Mammary epithelial cell (primary cell): ENCODE measurements at regions of chr1 and their contacts with region 1.

Region 1: GRCh38 chr1:21782868-21783678 is at the start of gene USP48:
- DNase-seq: peak; percentile 95
- H3K4me3 ChIP-seq: peak within 1 kb of the TSS; percentile 84 to 94 (median 85)
- H3K27ac ChIP-seq: peak within 1 kb of the TSS; percentile 98
- H3K4me1 ChIP-seq: no peaks in the 10 kb centered on the region
- H3K27me3 ChIP-seq: no peaks in the 10 kb centered on the region
- CTCF ChIP-seq: no peak
- total RNA-seq, gene USP48: 33.3 to 53.5 TPM

Region 2: GRCh38 chr1:21764615-21765423 is 18.3 kb before region 1 on chr1:
- CTCF ChIA-PET with region 1: no interaction called
- dilution Hi-C with region 1: no loop called
- in situ Hi-C with region 1: no loop called
- intact Hi-C with region 1: loop called (anchors 2 kb)
- DNase-seq: peak; percentile 90
- H3K4me3 ChIP-seq: no peak overlapping the region
- H3K27ac ChIP-seq: no peak overlapping the region
- H3K4me1 ChIP-seq: peaks cover 19% of the 10 kb centered on the region
- H3K27me3 ChIP-seq: no peaks in the 10 kb centered on the region
- CTCF ChIP-seq: no peak

Region 3: DNA sequence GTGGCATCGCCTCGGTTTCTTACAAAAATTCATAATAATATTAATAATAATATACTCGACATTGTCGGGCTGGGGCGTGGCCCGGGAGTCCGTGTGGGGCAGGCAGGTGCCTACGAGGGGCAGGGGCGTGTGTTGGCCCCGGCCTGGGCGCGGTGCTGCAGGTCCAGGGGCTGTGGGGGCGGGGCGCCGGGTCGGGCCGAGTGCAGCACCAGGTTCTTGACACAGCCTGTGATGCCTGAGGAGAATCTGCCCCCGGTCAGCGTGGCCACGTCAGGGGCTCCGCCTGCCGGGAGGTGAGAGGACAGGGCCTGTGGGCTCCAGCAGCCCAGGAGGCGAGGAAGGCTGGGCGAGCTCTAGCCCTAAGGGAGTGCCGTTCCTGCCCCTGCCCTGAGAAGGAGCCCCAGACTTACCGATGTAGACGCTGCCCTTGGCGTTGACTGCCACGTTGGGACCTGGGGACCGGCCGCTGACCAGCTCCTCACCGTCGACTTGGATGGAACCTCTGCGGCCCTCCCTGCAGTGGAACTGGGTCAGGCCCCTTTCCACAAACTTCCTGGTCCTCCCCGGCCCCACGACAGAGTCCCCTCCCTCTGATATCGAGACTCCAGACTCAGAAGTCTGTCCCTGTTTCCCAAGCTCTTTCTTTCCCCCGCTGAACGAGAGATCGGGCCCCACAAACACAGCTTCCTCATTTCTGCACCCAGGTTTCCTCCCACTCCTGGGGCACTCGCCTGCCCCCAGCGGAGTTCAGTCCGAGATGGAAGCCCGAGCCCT is 40.3 kb after region 1 on chr1:
- CTCF ChIA-PET with region 1: no interaction called
- dilution Hi-C with region 1: no loop called
- in situ Hi-C with region 1: no loop called
- intact Hi-C with region 1: no loop called
- DNase-seq: no peak
- H3K4me3 ChIP-seq: no peak overlapping the region
- H3K27ac ChIP-seq: no peak overlapping the region
- H3K4me1 ChIP-seq: no peaks in the 10 kb centered on the region
- H3K27me3 ChIP-seq: no peaks in the 10 kb centered on the region
- CTCF ChIP-seq: no peak

Region 4: DNA sequence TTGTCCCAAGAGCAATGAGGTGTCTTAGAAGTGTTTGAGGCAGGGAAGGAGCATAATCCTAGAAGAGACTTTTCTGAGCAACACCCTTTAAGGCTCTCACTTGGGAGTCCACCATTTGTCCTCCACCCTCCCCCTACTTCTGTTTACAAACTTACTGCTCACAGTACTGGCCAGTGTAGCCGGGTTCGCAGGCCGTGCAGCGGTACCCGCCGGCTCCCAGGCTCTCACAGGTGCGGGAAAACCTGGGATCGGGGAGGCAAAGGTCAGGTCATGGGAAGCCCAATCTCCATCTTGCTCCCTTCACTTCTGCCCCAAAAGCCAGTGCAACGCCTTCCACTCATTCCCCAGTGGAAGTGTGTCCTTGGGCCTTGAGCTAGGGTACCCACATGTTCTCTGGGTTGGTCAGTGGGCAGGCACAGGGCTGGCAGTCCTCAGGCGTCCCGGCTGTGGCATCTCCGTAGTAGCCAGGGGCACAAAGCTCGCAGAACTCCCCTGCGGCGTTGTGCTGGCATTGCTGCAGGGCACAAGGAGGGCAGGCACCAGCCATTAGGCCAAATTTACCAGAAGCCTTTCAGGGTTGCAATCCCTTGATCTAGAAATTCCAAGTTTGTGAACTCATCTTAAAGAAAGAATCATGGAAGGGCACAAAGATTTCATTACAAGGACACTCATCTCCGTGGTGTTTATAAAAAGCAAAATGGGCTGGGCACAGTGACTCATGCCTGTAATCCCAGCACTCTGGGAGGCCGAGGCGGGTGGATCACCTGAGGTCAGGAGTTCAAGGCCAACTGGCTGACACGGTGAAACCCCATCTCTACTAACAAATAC is 78.7 kb after region 1 on chr1:
- CTCF ChIA-PET with region 1: no interaction called
- dilution Hi-C with region 1: no loop called
- in situ Hi-C with region 1: no loop called
- intact Hi-C with region 1: loop called (anchors 2 kb)
- DNase-seq: peak; percentile 57
- H3K4me3 ChIP-seq: no peak overlapping the region
- H3K27ac ChIP-seq: no peak overlapping the region
- H3K4me1 ChIP-seq: peaks cover 20% of the 10 kb centered on the region
- H3K27me3 ChIP-seq: no peaks in the 10 kb centered on the region
- CTCF ChIP-seq: no peak

Region 5: GRCh38 chr1:21882669-21883415 is 99.8 kb after region 1 on chr1:
- CTCF ChIA-PET with region 1: no interaction called
- dilution Hi-C with region 1: loop called (anchors 5 kb)
- in situ Hi-C with region 1: no loop called
- intact Hi-C with region 1: no loop called
- DNase-seq: no peak
- H3K4me3 ChIP-seq: no peak overlapping the region
- H3K27ac ChIP-seq: no peak overlapping the region
- H3K4me1 ChIP-seq: no peaks in the 10 kb centered on the region
- H3K27me3 ChIP-seq: no peaks in the 10 kb centered on the region
- CTCF ChIP-seq: no peak

Region 6: DNA sequence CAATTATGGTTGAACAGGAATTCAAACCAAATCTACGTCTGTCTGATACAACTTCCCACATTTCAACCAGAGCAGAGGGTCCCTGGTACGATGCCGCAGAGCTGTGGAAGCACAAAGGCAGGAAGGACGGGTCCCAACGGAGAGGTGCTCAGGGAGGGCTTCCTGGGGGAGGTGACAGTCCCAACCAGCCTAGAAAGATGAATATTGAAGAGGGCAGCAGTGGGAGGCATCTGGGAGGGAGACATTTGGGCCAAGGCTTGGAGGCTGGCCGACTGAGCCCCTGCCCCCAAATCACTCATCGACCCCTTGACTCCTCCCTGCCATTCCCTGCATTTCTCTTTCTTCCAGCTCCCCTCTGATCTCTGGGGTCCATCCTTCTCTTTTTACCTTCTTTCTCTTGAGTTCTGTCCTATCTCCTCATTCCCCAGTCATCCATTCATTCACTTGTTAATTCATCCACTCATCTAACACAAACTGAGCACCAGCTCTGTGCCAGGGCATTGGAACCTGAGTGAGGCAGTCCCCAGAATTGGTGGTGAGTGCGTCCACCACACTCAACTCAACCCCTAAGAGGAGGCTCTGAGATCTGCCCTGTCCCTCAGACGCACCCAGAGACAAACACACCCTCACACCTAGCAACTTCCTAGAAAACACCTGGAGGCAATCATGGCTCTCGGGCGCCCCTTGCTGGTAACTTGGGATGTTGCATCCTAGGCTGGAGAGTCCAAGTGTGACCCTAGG is 180.6 kb after region 1 on chr1:
- CTCF ChIA-PET with region 1: no interaction called
- dilution Hi-C with region 1: loop called (anchors 5 kb)
- in situ Hi-C with region 1: no loop called
- intact Hi-C with region 1: loop called (anchors 2 kb)
- DNase-seq: peak; percentile 71
- H3K4me3 ChIP-seq: no peak overlapping the region
- H3K27ac ChIP-seq: no peak overlapping the region
- H3K4me1 ChIP-seq: peaks cover 3% of the 10 kb centered on the region
- H3K27me3 ChIP-seq: no peaks in the 10 kb centered on the region
- CTCF ChIP-seq: peak; percentile 94

Region 7: GRCh38 chr1:22451702-22452474 is 668.8 kb after region 1 on chr1 and contains the start of gene ZBTB40:
- CTCF ChIA-PET with region 1: no interaction called
- dilution Hi-C with region 1: no loop called
- in situ Hi-C with region 1: no loop called
- intact Hi-C with region 1: loop called (anchors 10 kb)
- DNase-seq: peak; percentile 94
- H3K4me3 ChIP-seq: peak within 1 kb of the TSS; percentile 68 to 76 (median 74)
- H3K27ac ChIP-seq: peak within 1 kb of the TSS; percentile 56
- H3K4me1 ChIP-seq: no peaks in the 10 kb centered on the region
- H3K27me3 ChIP-seq: no peaks in the 10 kb centered on the region
- CTCF ChIP-seq: peak in 1 of 2 donors; percentile 7
- total RNA-seq, gene ZBTB40: 10.8 to 13.6 TPM